ENCODE measurements at regions of chr12 and their contacts with region 1.

Region 1: DNA sequence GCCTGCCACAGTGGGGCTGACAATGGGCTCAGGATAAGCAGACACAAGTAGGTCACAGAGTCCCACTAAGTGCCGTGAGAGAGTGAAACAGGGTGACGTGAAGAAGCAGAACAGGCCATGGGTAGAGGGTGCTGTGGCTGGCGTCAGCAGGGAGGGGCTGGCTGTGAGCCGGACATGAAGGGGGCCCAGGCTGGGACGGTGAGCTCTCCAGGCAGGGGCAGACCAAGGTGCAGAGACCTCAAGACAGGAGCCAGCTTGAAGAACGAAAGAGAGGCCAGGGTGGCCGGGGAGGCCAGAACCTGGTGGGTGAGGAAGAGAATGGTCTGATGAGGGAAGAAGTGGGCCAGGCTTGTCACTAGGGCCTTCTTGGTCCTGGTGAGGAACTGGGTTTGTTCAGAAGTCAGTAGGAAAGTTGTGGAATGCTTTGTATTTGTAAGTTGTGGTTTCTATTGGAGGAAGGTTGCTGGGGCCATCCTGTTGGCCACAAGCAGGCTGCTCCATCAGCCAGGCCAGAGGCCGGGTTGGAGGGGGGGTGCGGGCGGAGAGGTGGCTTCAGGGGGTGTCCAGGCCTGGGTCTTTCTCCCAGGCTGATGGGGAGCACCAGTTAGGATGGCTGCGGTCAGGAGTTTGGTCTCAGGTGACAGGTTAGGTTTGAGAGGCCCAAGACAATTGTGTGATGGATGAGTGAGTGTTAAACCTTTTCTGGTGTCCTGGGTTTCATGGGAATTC is 21.4 kb upstream of the MLXIP start:
- DNase-seq: no peak
- H3K4me3 ChIP-seq: no peak overlapping the region
- H3K27ac ChIP-seq: no peak overlapping the region
- H3K4me1 ChIP-seq: peaks cover 3 to 32% (median 5%) of the 10 kb centered on the region in 3 donors
- H3K27me3 ChIP-seq: no peaks in the 10 kb centered on the region
- CTCF ChIP-seq: no peak
- POLR2A ChIP-seq: no peak

Region 2: DNA sequence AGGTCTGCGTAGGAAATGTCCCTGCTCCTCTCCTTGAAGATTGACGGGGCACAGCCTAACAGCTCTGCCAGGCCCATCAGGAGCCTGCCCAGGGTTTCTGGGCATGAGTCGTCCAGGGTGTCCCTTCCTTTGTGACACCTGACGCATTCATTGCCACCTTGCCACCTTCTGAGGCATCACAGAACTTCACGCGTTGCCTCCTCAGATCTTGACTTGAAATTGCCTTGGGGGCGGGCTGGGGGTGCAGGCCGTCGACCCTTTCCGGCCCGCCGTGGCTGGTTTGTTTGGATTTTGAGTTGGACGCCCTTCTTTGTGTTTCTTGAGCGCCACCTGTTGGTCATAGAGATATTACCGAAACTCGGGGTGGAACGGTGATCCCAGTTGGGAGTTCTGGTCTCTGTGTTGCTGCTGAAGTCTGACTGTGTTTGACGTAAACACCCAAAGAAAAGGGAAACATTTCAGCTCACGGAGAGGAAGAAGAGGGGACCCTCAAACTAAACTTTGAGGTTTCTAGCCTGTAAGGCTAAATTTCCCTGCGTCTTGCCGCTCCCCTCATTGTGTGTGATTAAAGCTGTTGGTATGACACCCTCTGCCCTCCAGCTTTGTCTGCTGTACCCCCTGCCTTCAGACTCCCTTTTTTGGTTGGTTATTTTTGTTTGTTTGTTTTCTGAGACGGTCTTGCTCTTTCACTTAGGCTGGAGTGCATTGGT is 66.0 kb after region 1 on chr12:
- intact Hi-C with region 1: loop called (anchors 2 kb)
- DNase-seq: no peak
- H3K4me3 ChIP-seq: peak overlapping the region in 1 of 4 donors; percentile 38
- H3K27ac ChIP-seq: peak overlapping the region in 2 of 4 donors; percentile 23 to 29
- H3K4me1 ChIP-seq: peaks cover 12 to 52% (median 21%) of the 10 kb centered on the region in 3 donors
- H3K27me3 ChIP-seq: no peaks in the 10 kb centered on the region
- CTCF ChIP-seq: peak; percentile 57 to 85 (median 74)
- POLR2A ChIP-seq: no peak

Region 3: DNA sequence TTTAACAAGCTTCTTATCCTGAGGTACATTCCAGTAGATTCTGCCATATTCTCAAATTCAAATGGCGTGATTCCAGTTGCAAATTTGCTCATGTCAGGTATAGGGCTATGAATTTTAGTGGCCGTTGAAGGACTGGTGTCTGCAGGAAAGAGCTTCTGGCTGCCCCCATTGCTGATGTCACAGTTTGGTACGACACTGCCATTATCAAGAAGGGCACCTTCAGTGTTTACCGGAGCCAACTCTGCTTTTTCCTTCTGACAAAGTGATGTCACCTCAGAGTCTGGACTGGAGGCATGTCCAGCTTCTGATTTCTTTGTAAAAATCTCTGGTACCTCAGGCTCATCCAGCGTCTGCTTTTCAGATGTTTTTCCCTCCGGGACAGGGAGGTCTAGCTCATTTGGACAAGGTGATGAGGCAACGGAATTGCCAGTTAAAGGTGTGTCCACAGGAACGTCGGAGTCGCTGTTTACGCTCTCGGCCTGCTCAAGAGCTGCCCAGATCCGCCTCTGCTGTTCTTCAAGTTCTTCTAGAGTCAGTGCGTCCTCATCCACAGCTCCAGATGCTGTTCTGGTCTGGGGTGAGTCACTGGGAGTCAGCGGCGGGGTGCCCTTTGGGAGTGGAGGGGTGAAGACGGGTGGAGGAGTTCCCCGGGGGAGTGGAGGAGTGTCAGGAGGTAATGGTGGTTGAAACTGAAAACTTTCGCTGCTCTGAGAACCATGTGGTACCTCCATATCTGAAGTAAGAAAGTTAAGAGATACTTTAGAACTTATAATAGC is 416.6 kb after region 1 on chr12:
- intact Hi-C with region 1: no loop called
- DNase-seq: no peak
- H3K4me3 ChIP-seq: no peak overlapping the region
- H3K27ac ChIP-seq: peak overlapping the region; percentile 33 to 76 (median 68)
- H3K4me1 ChIP-seq: peaks cover 4 to 15% (median 4%) of the 10 kb centered on the region in 3 donors
- H3K27me3 ChIP-seq: no peaks in the 10 kb centered on the region
- CTCF ChIP-seq: no peak
- POLR2A ChIP-seq: no peak